Activated CD8-positive, alpha-beta T cell treated with anti-CD3 and anti-CD28 coated beads for 36 hours (primary cell): ENCODE measurements at regions of chr13 and their contacts with region 1.

Region 1: GRCh38 chr13:99436686-99437416 is 64.4 kb upstream of the TM9SF2 start:
- DNase-seq: peak; percentile 99
- ATAC-seq: peak; percentile 47
- H3K4me3 Mint-ChIP-seq: peak overlapping the region; percentile 19
- H3K27ac Mint-ChIP-seq: peak overlapping the region; percentile 80
- H3K4me1 Mint-ChIP-seq: peaks cover 56% of the 10 kb centered on the region
- H3K27me3 Mint-ChIP-seq: peaks cover 2% of the 10 kb centered on the region
- CTCF ChIP-seq: peak; percentile 100

Region 2: GRCh38 chr13:99176309-99177276 is 260.3 kb before region 1 on chr13:
- CTCF ChIA-PET with region 1: interaction called, 29 read pairs
- POLR2A ChIA-PET with region 1: no interaction called
- intact Hi-C with region 1: loop called (anchors 10 kb)
- DNase-seq: peak; percentile 87
- ATAC-seq: peak; percentile 91
- H3K4me3 Mint-ChIP-seq: peak overlapping the region; percentile 61
- H3K27ac Mint-ChIP-seq: peak overlapping the region; percentile 83
- H3K4me1 Mint-ChIP-seq: peaks cover 38% of the 10 kb centered on the region
- H3K27me3 Mint-ChIP-seq: no peaks in the 10 kb centered on the region
- CTCF ChIP-seq: peak; percentile 95

Region 3: GRCh38 chr13:99288089-99288488 is 148.8 kb before region 1 on chr13:
- CTCF ChIA-PET with region 1: interaction called, 16 read pairs
- POLR2A ChIA-PET with region 1: interaction called, 4 read pairs
- intact Hi-C with region 1: no loop called
- DNase-seq: peak; percentile 88
- ATAC-seq: peak; percentile 85
- H3K4me3 Mint-ChIP-seq: peak overlapping the region; percentile 49
- H3K27ac Mint-ChIP-seq: peak overlapping the region; percentile 85
- H3K4me1 Mint-ChIP-seq: peaks cover 74% of the 10 kb centered on the region
- H3K27me3 Mint-ChIP-seq: no peaks in the 10 kb centered on the region
- CTCF ChIP-seq: no peak

Region 4: GRCh38 chr13:99322297-99323103 is 114.4 kb before region 1 on chr13:
- CTCF ChIA-PET with region 1: interaction called, 21 read pairs
- POLR2A ChIA-PET with region 1: interaction called, 4 read pairs
- intact Hi-C with region 1: no loop called
- DNase-seq: peak; percentile 70
- ATAC-seq: peak; percentile 78
- H3K4me3 Mint-ChIP-seq: peak overlapping the region; percentile 47
- H3K27ac Mint-ChIP-seq: peak overlapping the region; percentile 94
- H3K4me1 Mint-ChIP-seq: peaks cover 77% of the 10 kb centered on the region
- H3K27me3 Mint-ChIP-seq: no peaks in the 10 kb centered on the region
- CTCF ChIP-seq: no peak

Region 5: GRCh38 chr13:99380921-99381645 is 55.8 kb before region 1 on chr13:
- CTCF ChIA-PET with region 1: interaction called, 395 read pairs
- POLR2A ChIA-PET with region 1: interaction called, 38 read pairs
- intact Hi-C with region 1: no loop called
- DNase-seq: peak; percentile 90
- ATAC-seq: peak; percentile 68
- H3K4me3 Mint-ChIP-seq: no peak overlapping the region
- H3K27ac Mint-ChIP-seq: peak overlapping the region; percentile 86
- H3K4me1 Mint-ChIP-seq: peaks cover 89% of the 10 kb centered on the region
- H3K27me3 Mint-ChIP-seq: no peaks in the 10 kb centered on the region
- CTCF ChIP-seq: no peak

Region 6: DNA sequence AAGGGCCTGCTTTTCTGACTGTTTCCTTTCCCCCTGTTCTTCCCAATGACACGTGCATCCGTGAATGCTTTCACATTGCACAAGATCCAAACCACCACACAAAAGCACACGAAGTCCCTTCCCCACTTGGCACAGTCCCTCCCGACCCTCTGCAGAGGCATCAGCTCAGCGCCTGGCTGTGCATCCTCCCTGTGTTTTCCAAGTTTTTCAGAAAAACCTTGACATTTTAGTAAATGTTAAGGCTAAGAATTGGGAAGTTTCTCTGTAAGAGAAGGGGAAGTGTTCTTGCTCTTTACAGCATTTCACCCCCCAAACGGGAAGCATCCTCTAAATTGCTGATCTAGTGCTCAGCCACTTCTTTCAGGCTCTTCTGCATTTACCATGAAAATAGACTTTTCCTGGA is 30.1 kb before region 1 on chr13:
- CTCF ChIA-PET with region 1: interaction called, 63 read pairs
- POLR2A ChIA-PET with region 1: interaction called, 6 read pairs
- intact Hi-C with region 1: no loop called
- DNase-seq: no peak
- ATAC-seq: no peak
- H3K4me3 Mint-ChIP-seq: no peak overlapping the region
- H3K27ac Mint-ChIP-seq: no peak overlapping the region
- H3K4me1 Mint-ChIP-seq: peaks cover 59% of the 10 kb centered on the region
- H3K27me3 Mint-ChIP-seq: no peaks in the 10 kb centered on the region
- CTCF ChIP-seq: no peak

Region 7: DNA sequence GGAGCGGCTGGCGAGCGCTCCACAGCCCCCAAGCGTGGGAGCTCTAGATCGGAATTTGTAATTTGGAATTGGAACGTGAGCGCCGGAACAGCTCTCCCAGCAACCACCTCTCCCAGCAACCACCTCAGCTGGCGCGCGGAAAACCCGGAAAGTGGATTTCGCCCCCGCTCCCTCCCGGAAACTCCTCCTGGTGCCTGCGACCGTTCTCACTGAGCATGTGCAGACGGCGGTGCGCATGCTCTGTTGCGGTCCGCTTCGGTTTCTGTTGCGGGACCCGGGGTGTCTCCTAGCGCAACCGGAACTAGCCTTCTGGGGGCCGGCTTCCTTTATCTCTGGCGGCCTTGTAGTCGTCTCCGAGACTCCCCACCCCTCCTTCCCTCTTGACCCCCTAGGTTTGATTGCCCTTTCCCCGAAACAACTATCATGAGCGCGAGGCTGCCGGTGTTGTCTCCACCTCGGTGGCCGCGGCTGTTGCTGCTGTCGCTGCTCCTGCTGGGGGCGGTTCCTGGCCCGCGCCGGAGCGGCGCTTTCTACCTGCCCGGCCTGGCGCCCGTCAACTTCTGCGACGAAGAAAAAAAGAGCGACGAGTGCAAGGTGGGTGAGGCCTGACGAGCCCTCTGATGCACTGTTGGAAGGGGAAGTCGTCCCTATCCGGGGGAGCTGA is 64.5 kb after region 1 on chr13 and contains the start of gene TM9SF2:
- CTCF ChIA-PET with region 1: interaction called, 44 read pairs
- POLR2A ChIA-PET with region 1: interaction called, 3 read pairs
- intact Hi-C with region 1: loop called (anchors 2 kb)
- DNase-seq: peak; percentile 97
- ATAC-seq: peak; percentile 70
- H3K4me3 Mint-ChIP-seq: peak within 1 kb of the TSS; percentile 84
- H3K27ac Mint-ChIP-seq: peak within 1 kb of the TSS; percentile 95
- H3K4me1 Mint-ChIP-seq: peaks cover 64% of the 10 kb centered on the region
- H3K27me3 Mint-ChIP-seq: no peaks in the 10 kb centered on the region
- CTCF ChIP-seq: no peak
- total RNA-seq, gene TM9SF2: 48.0 to 48.1 TPM